IMR-90 (cell line): ENCODE measurements at regions of chr5 and their contacts with region 1.

Region 1: GRCh38 chr5:135944967-135945560 is 9.7 kb downstream of the LECT2 start:
- DNase-seq: peak; percentile 89
- ATAC-seq: peak; percentile 82
- H3K4me3 ChIP-seq: no peak overlapping the region
- H3K27ac ChIP-seq: no peak overlapping the region
- H3K4me1 ChIP-seq: no peaks in the 10 kb centered on the region
- H3K27me3 ChIP-seq: no peaks in the 10 kb centered on the region; the same call in 1 of the 2 replicates
- CTCF ChIP-seq: peak; percentile 87
- POLR2A ChIP-seq: no peak
- RAD21 ChIP-seq: peak; percentile 92

Region 2: DNA sequence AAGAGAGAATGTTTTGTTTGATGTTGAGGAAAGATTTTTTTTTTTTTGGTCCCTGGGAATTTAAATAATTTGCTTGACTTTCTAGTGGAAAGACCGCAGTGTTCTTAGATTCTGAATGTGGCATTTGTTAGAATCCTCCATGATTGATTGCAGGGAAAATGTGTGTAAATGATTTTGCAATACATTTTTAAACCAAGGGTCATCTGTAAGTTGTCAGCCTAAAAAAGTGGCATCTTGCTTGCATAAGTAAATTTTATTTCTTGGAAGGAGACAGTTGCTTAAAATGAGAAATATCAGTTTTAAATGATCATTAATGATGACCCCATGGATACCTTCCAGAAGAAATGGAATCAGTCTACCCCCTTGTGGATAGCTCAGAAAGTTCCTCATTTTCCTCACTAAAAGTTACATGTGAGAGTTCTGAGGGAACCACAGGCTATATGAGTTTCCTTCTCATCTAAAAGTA is 215.7 kb before region 1 on chr5:
- CTCF ChIA-PET with region 1: no interaction called
- POLR2A ChIA-PET with region 1: no interaction called
- dilution Hi-C with region 1: no loop called
- in situ Hi-C with region 1: no loop called
- intact Hi-C with region 1: no loop called
- DNase-seq: no peak
- ATAC-seq: no peak
- H3K4me3 ChIP-seq: no peak overlapping the region
- H3K27ac ChIP-seq: no peak overlapping the region
- H3K4me1 ChIP-seq: no peaks in the 10 kb centered on the region
- H3K27me3 ChIP-seq: peaks cover 2% of the 10 kb centered on the region; the same call in 1 of the 2 replicates
- CTCF ChIP-seq: 0 out of 2 replicates have a peak, but pooled peaks have one; percentile 5
- POLR2A ChIP-seq: no peak
- RAD21 ChIP-seq: no peak

Region 3: GRCh38 chr5:136020383-136021015 is 75.4 kb after region 1 on chr5:
- CTCF ChIA-PET with region 1: interaction called, 5 read pairs
- POLR2A ChIA-PET with region 1: no interaction called
- dilution Hi-C with region 1: no loop called
- in situ Hi-C with region 1: no loop called
- intact Hi-C with region 1: loop called (anchors 1 kb)
- DNase-seq: peak; percentile 99
- ATAC-seq: peak; percentile 66
- H3K4me3 ChIP-seq: no peak overlapping the region
- H3K27ac ChIP-seq: peak overlapping the region; percentile 97; the same call in 1 of the 2 replicates
- H3K4me1 ChIP-seq: peaks cover 51% of the 10 kb centered on the region
- H3K27me3 ChIP-seq: no peaks in the 10 kb centered on the region
- CTCF ChIP-seq: no peak
- POLR2A ChIP-seq: 0 out of 2 replicates have a peak, but pooled peaks have one; percentile 58
- RAD21 ChIP-seq: no peak

Region 4: GRCh38 chr5:136028782-136029742 is 84.0 kb after region 1 on chr5 and contains the start of gene TGFBI:
- CTCF ChIA-PET with region 1: interaction called, 6 read pairs
- POLR2A ChIA-PET with region 1: no interaction called
- dilution Hi-C with region 1: no loop called
- in situ Hi-C with region 1: no loop called
- intact Hi-C with region 1: loop called (anchors 1 kb)
- DNase-seq: peak; percentile 67
- ATAC-seq: peak; percentile 90
- H3K4me3 ChIP-seq: peak within 1 kb of the TSS; percentile 92
- H3K27ac ChIP-seq: peak within 1 kb of the TSS; percentile 89
- H3K4me1 ChIP-seq: peaks cover 28% of the 10 kb centered on the region
- H3K27me3 ChIP-seq: no peaks in the 10 kb centered on the region
- CTCF ChIP-seq: peak; percentile 17; the same call in 1 of the 2 replicates
- POLR2A ChIP-seq: peak; percentile 96
- RAD21 ChIP-seq: no peak; the same call in 1 of the 2 replicates
- total RNA-seq, gene TGFBI: 483 and 618 TPM in 2 replicates

Region 5: DNA sequence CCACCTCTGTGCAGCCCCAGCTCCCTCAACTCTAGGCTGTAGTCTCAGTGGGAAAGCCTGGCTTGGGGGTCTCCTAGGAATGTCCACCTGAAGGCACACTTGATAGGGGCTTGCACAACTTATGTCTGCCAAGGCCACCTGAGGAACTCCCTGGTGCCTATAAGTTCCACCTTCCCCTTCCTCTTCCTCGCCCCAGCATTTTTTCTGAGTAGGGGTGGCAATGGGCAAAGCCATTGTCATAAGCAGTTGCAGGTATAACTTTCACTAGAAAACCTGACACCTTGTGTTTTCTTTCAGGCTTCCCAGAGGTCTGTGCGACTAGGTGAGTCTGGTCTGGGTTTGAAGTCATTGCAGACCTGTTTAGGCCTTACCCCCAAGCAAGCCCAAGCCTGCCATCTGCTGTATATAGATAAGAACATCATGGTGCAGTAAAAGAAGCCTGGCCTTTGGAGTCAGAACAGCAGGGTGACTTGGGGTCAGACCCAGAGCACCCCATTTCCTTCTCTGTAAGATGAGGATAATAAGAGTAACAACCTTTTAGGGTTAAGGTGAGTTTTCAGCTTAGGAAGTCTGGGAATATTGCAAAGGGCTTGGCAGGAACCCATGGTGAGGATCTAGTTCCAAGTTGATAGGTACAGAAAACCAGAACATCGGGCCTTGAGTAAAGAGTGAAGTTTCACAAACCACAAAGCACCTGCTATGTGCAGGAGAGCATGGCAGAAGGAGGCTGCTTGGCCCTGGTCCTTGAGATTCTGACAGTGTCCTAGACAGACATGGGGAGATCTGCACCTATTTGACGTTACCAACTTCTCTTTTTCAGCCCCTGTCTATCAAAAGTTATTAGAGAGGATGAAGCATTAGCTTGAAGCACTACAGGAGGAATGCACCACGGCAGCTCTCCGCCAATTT is 117.6 kb after region 1 on chr5:
- CTCF ChIA-PET with region 1: interaction called, 6 read pairs
- POLR2A ChIA-PET with region 1: no interaction called
- dilution Hi-C with region 1: no loop called
- in situ Hi-C with region 1: no loop called
- intact Hi-C with region 1: loop called (anchors 1 kb)
- DNase-seq: peak; percentile 45
- ATAC-seq: no peak
- H3K4me3 ChIP-seq: no peak overlapping the region
- H3K27ac ChIP-seq: peak overlapping the region; percentile 18; the same call in 1 of the 2 replicates
- H3K4me1 ChIP-seq: peaks cover 18% of the 10 kb centered on the region
- H3K27me3 ChIP-seq: no peaks in the 10 kb centered on the region
- CTCF ChIP-seq: peak; percentile 54
- POLR2A ChIP-seq: no peak
- RAD21 ChIP-seq: peak; percentile 74

Region 6: DNA sequence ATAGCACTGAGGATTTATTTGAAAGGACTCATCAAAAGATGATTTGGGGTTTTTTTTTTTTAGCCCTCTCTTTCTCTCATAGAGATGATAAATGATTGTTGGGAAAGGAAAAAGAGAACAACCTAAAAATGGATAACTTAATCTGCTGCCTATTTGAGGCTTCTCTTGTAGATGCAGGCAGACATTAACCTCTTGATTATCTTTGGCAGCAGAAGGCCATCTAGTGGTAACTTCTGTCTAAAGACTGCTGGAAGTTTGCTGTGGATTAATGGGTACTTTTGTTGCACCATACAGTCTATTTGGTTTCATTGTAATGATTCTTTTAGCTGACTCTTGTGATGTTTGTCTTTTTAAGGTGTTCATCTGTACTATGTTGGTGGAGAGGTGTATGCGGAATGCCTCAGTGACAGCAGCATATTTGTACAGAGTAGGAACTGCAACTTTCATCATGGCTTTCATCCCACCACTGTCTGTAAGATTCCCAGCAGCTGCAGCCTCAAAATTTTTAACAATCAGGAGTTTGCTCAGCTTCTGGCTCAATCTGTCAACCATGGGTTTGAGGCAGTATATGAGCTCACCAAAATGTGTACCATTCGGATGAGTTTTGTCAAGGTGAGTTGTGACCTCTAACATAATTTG is 229.1 kb after region 1 on chr5:
- CTCF ChIA-PET with region 1: interaction called, 4 read pairs
- POLR2A ChIA-PET with region 1: no interaction called
- dilution Hi-C with region 1: no loop called
- in situ Hi-C with region 1: no loop called
- intact Hi-C with region 1: loop called (anchors 5 kb)
- DNase-seq: peak; percentile 75
- ATAC-seq: peak; percentile 92
- H3K4me3 ChIP-seq: no peak overlapping the region
- H3K27ac ChIP-seq: no peak overlapping the region
- H3K4me1 ChIP-seq: no peaks in the 10 kb centered on the region
- H3K27me3 ChIP-seq: no peaks in the 10 kb centered on the region
- CTCF ChIP-seq: peak; percentile 72
- POLR2A ChIP-seq: no peak
- RAD21 ChIP-seq: peak; percentile 67

Region 7: DNA sequence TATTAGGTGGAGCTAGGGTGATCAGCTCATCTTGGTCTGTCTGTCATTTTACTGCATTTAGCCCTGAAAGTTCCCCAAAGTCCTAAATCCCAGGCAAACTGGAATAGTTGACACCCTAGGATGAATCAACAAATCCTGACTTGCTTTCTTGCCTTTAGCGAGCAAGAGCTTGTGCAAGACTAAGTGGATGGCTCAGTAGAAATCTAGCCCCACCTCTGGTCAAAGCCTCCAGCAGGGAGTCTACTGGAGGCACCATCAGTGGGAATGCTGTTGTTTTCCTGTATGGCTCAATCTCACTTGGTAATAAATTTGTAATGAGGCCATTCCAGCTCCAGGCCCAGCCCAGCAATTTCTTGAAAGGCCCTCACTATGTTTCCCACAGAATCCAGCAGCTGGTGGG is 463.9 kb after region 1 on chr5:
- CTCF ChIA-PET with region 1: no interaction called
- POLR2A ChIA-PET with region 1: no interaction called
- dilution Hi-C with region 1: no loop called
- in situ Hi-C with region 1: no loop called
- intact Hi-C with region 1: no loop called
- DNase-seq: no peak
- ATAC-seq: no peak
- H3K4me3 ChIP-seq: no peak overlapping the region
- H3K27ac ChIP-seq: no peak overlapping the region
- H3K4me1 ChIP-seq: no peaks in the 10 kb centered on the region
- H3K27me3 ChIP-seq: no peaks in the 10 kb centered on the region
- CTCF ChIP-seq: no peak
- POLR2A ChIP-seq: no peak
- RAD21 ChIP-seq: no peak